ENCODE measurements at regions of chr17 and their contacts with region 1.

Region 1: DNA sequence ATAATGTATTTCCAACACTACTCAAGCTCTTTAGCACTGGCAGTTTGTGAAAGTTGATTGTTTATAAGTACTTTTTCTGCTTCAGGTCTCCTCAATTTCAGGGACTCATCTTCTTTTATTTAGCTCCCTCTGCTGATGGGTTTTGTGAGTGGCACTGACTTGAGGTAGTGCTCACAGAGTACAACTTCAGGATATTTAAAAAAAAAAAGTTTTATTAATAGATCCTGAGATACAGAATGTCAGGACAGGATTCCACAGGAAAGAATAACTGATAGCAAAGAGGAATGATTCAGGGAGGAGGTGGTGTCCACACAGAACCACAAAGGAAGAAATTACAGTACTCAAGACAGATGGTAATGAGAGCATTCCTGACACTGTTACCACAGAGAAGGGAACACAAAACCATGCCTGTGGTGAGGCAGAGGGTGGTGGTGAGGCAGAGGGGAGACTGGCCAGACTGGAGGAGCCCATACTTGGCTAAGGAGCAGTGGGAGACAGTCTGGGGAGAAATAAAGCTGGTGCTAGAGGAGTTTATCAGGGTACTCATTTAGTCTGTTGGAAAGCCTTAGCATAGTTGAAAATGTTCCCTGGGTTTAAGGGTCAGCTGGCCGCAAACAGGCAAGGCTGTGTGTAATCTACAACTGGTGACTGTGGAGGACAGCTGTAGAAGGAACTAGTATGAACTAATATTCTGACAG is 63.7 kb downstream of the SPAG9 start:
- DNase-seq: peak in 27 of 42 donors; percentile 15 to 83 (median 53)

Region 2: GRCh38 chr17:51000835-51001638 is 55.9 kb before region 1 on chr17:
- intact Hi-C with region 1: loop called (anchors 1 kb)
- DNase-seq: peak in 9 of 42 donors; percentile 32 to 79 (median 58)

Measured in head of caudate nucleus (tissue), 42 donors.